Left ventricle myocardium superior (tissue), 1 donor: ENCODE measurements at regions of chr5 and their contacts with region 1.

Region 1: GRCh38 chr5:11110128-11110527 is 349.1 kb upstream of the DAP start:
- DNase-seq: no peak
- ATAC-seq: peak; percentile 50

Region 2: GRCh38 chr5:10064546-10065195 is 1045.5 kb before region 1 on chr5:
- intact Hi-C with region 1: no loop called
- DNase-seq: no peak
- ATAC-seq: no peak

Region 3: DNA sequence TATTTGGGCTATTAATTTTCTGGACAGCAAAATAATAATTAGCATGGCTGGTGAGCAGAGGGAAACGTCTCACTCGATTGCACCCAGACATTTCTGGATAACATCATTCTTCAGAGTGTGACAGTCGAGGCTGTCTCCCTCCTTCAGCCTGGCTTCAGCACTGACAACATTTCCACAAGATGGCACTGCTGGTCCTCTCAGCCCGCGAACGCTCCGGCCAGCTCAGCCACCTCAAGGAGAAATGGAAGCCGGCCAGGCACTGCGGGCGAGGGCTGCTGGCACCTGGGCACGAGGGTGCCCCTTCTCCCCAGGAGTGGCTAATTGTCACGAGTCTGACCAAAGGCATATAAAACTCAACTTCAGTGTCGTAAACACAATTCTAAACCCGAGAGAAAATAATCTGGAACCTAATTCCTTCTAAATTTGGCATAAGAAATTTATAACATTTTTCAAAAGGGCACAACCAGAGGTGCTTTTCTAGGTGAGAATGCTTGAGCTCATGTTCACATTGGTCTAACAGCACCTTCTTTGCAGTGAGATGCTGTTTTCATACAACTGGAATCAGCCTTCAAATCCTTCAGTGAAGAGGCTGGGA is 415.0 kb before region 1 on chr5:
- intact Hi-C with region 1: loop called (anchors 5 kb)
- DNase-seq: peak; percentile 84
- ATAC-seq: peak; percentile 95

Region 4: DNA sequence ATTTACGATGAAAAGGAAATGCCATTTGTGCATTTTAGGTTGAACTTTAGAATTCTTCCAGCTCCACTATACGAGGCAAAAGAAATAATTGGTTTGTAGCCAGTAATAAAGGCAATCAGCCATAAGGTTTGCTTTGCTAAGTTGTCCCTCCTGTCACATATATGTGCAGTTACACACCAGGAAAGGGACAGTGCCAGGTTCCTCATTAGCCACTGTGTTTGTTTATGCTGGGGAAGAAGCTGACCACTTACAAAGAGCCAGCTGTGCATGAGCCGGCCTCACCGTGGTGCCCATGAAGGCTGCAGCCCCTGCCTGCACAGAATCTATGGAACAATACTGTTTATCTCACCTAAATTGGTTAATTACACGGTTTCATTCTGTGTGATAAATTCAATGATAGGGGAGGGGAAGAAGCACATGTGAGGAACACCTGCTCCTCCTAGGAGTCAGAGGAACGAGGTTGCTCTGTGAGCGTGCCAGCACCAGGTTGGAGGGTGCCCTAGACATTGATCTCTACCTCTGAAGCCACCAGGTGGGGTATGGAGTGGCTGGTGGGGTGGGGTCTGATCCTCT is 175.3 kb before region 1 on chr5:
- intact Hi-C with region 1: no loop called
- DNase-seq: no peak
- ATAC-seq: no peak

Region 5: GRCh38 chr5:11075035-11075805 is 34.9 kb before region 1 on chr5:
- intact Hi-C with region 1: no loop called
- DNase-seq: no peak
- ATAC-seq: no peak